ENCODE measurements at regions of chr4 and their contacts with region 1.

Region 1: DNA sequence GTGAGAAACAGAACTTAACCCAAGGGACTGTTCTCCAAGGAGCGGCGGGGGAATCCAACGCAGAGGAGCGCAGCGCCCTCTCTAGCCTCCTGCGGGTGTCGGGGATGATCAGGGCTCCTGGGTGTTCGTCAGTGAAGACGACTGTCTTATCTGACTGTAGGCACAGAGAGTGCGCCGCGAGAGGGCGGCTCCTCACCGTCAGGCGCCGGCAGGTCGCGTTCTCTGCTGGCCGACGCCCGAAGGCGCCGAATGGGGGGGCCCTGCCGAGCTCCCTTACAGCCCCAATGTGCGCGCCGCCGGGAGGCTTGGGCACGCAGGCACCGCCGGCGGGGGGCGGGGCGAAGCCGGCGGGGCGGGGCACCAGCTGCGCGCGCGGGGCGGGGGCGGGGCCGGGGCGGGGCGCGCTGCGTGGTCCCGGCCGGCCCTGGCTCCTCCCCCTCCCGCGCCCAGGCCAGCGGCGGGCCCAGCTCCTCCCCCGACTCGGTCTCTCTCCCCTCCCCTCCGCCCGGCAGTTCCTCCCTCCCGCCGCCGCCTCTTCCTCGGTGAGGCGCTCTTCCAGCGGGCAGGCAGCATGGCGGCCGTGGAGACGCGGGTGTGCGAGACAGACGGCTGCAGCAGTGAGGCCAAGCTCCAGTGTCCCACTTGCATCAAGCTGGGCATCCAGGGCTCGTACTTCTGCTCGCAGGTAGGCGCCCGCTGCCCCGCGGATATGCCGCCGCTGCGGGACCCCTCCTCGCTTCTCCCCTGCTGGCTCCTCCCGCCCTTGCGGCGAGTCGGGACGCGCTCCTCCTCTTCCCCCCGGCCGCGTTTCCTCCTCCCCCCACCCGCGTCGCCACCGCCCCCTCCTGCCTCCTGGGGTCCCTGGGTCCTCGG is at the start of gene METAP1:
- DNase-seq: peak; percentile 92 to 99 (median 96)
- ATAC-seq: peak; percentile 85
- H3K4me3 ChIP-seq: peak within 1 kb of the TSS; percentile 90
- H3K4me3 Mint-ChIP-seq: peak within 1 kb of the TSS; percentile 93
- H3K27ac ChIP-seq: peak within 1 kb of the TSS; percentile 81 to 89
- H3K27ac Mint-ChIP-seq: peak within 1 kb of the TSS; percentile 99
- H3K4me1 ChIP-seq: peaks cover 23% of the 10 kb centered on the region
- H3K4me1 Mint-ChIP-seq: peaks cover 35% of the 10 kb centered on the region
- H3K27me3 ChIP-seq: no peaks in the 10 kb centered on the region
- H3K27me3 Mint-ChIP-seq: no peaks in the 10 kb centered on the region
- CTCF ChIP-seq: peak; percentile 73
- total RNA-seq, gene METAP1: 25.1 to 26.6 TPM

Region 2: GRCh38 chr4:98467627-98468072 is 527.8 kb before region 1 on chr4:
- CTCF ChIA-PET with region 1: interaction called, 14 read pairs
- POLR2A ChIA-PET with region 1: interaction called, 7 read pairs
- intact Hi-C with region 1: loop called in 1 of 2 experiments (anchors 5 kb)
- DNase-seq: peak; percentile 48 to 84 (median 62)
- ATAC-seq: peak; percentile 97
- H3K4me3 ChIP-seq: peak overlapping the region; percentile 32
- H3K4me3 Mint-ChIP-seq: peak overlapping the region; percentile 59
- H3K27ac ChIP-seq: no peak overlapping the region
- H3K27ac Mint-ChIP-seq: no peak overlapping the region
- H3K4me1 ChIP-seq: peaks cover 18% of the 10 kb centered on the region
- H3K4me1 Mint-ChIP-seq: peaks cover 24% of the 10 kb centered on the region
- H3K27me3 ChIP-seq: no peaks in the 10 kb centered on the region
- H3K27me3 Mint-ChIP-seq: no peaks in the 10 kb centered on the region
- CTCF ChIP-seq: peak; percentile 84

Region 3: GRCh38 chr4:98939892-98940298 is 55.5 kb before region 1 on chr4:
- CTCF ChIA-PET with region 1: no interaction called
- POLR2A ChIA-PET with region 1: no interaction called
- intact Hi-C with region 1: no loop called
- DNase-seq: peak in 3 of 14 experiments; percentile 30 to 56 (median 54)
- ATAC-seq: peak; percentile 52
- H3K4me3 ChIP-seq: no peak overlapping the region
- H3K4me3 Mint-ChIP-seq: no peak overlapping the region
- H3K27ac ChIP-seq: no peak overlapping the region
- H3K27ac Mint-ChIP-seq: no peak overlapping the region
- H3K4me1 ChIP-seq: no peaks in the 10 kb centered on the region
- H3K4me1 Mint-ChIP-seq: peaks cover 7% of the 10 kb centered on the region
- H3K27me3 ChIP-seq: no peaks in the 10 kb centered on the region
- H3K27me3 Mint-ChIP-seq: no peaks in the 10 kb centered on the region
- CTCF ChIP-seq: peak; percentile 72

Region 4: DNA sequence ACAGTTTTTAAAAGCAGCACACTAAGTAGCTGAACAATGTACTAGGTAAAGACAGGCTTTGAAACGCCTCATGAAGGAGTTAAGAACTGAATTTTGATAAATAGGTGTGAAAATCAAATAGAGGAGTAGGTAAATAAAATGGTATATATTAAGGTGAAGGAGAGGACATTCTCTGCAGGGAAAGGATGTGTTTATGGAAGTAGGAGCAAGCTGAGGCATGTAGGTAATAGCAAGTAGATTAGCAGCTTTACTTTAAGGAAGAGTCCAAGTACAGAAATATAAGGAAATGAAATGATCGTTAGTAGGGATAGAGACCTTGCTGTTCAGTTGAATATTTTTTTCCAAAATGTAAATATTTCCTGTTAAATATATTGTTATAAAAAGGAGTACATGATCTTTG is 12.6 kb after region 1 on chr4:
- CTCF ChIA-PET with region 1: interaction called, 23 read pairs
- POLR2A ChIA-PET with region 1: interaction called, 3 read pairs
- intact Hi-C with region 1: no loop called
- DNase-seq: no peak
- ATAC-seq: no peak
- H3K4me3 ChIP-seq: no peak overlapping the region
- H3K4me3 Mint-ChIP-seq: no peak overlapping the region
- H3K27ac ChIP-seq: no peak overlapping the region
- H3K27ac Mint-ChIP-seq: no peak overlapping the region
- H3K4me1 ChIP-seq: no peaks in the 10 kb centered on the region
- H3K4me1 Mint-ChIP-seq: peaks cover 67% of the 10 kb centered on the region
- H3K27me3 ChIP-seq: no peaks in the 10 kb centered on the region
- H3K27me3 Mint-ChIP-seq: no peaks in the 10 kb centered on the region
- CTCF ChIP-seq: no peak

Region 5: GRCh38 chr4:99043346-99043745 is 47.9 kb after region 1 on chr4:
- CTCF ChIA-PET with region 1: interaction called, 13 read pairs
- POLR2A ChIA-PET with region 1: interaction called, 49 read pairs
- intact Hi-C with region 1: loop called in 1 of 2 experiments (anchors 2 kb)
- DNase-seq: peak in 3 of 14 experiments; percentile 61 to 86 (median 61)
- ATAC-seq: peak; percentile 96
- H3K4me3 ChIP-seq: no peak overlapping the region
- H3K4me3 Mint-ChIP-seq: peak overlapping the region; percentile 8
- H3K27ac ChIP-seq: peak overlapping the region; percentile 48 to 81
- H3K27ac Mint-ChIP-seq: peak overlapping the region; percentile 85
- H3K4me1 ChIP-seq: peaks cover 5% of the 10 kb centered on the region
- H3K4me1 Mint-ChIP-seq: peaks cover 31% of the 10 kb centered on the region
- H3K27me3 ChIP-seq: no peaks in the 10 kb centered on the region
- H3K27me3 Mint-ChIP-seq: no peaks in the 10 kb centered on the region
- CTCF ChIP-seq: no peak

Region 6: GRCh38 chr4:99071159-99071558 is 75.7 kb after region 1 on chr4:
- CTCF ChIA-PET with region 1: interaction called, 11 read pairs
- POLR2A ChIA-PET with region 1: interaction called, 5 read pairs
- intact Hi-C with region 1: no loop called
- DNase-seq: no peak
- ATAC-seq: no peak
- H3K4me3 ChIP-seq: no peak overlapping the region
- H3K4me3 Mint-ChIP-seq: no peak overlapping the region
- H3K27ac ChIP-seq: no peak overlapping the region
- H3K27ac Mint-ChIP-seq: no peak overlapping the region
- H3K4me1 ChIP-seq: no peaks in the 10 kb centered on the region
- H3K4me1 Mint-ChIP-seq: no peaks in the 10 kb centered on the region
- H3K27me3 ChIP-seq: no peaks in the 10 kb centered on the region
- H3K27me3 Mint-ChIP-seq: no peaks in the 10 kb centered on the region
- CTCF ChIP-seq: no peak

Region 7: DNA sequence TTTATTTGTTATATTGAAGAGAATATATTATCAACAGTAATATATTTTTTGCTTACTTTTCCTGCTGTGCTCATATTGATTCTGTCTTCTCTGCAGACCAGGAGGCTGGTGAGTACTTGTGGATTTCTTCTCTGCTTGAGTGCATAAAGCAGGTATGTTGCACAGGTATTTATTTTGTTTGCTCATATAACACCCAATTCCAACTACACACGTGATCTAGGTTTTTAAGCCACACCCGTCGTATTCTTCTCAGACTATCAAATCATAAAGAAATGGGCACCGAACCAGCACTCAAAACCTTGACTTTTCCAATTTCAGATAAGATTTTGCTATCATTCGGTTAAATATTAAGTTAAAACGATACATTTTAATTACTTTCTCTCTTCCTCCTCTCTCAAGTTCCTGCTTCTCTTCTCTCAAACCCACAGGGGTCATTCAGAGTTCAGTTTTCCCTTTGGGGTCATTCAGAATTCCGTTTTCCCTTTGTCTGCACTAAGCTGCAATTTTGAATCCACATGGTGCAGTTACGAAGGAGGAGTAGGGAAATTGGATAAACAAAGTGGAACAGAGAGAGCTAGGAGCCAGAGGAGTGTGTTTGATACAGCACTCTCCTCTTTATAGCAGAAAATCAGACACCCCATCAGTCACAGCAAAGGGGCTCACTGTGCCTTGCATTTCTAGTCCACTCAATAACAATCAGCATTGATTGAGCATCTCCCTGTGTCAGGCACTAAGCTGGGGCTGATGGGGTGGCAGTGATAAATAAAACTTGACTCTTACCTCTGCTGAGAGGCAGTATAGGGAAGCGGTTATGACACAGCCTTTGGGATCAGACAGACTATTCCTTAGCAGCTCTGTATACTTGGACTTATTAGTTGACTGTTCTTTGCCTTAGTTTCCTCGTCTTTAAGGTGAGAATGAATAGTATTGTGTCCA is 357.5 kb after region 1 on chr4 and contains the start of gene ADH1C:
- CTCF ChIA-PET with region 1: no interaction called
- POLR2A ChIA-PET with region 1: no interaction called
- intact Hi-C with region 1: no loop called
- DNase-seq: no peak
- ATAC-seq: no peak
- H3K4me3 ChIP-seq: no peak within 1 kb of the TSS
- H3K4me3 Mint-ChIP-seq: no peak within 1 kb of the TSS
- H3K27ac ChIP-seq: no peak within 1 kb of the TSS
- H3K27ac Mint-ChIP-seq: no peak within 1 kb of the TSS
- H3K4me1 ChIP-seq: no peaks in the 10 kb centered on the region
- H3K4me1 Mint-ChIP-seq: peaks cover 11% of the 10 kb centered on the region
- H3K27me3 ChIP-seq: peaks cover 2 to 3% of the 10 kb centered on the region in 2 experiments
- H3K27me3 Mint-ChIP-seq: peaks cover 24% of the 10 kb centered on the region
- CTCF ChIP-seq: no peak
- total RNA-seq, gene ADH1C: not detected

Region 8: DNA sequence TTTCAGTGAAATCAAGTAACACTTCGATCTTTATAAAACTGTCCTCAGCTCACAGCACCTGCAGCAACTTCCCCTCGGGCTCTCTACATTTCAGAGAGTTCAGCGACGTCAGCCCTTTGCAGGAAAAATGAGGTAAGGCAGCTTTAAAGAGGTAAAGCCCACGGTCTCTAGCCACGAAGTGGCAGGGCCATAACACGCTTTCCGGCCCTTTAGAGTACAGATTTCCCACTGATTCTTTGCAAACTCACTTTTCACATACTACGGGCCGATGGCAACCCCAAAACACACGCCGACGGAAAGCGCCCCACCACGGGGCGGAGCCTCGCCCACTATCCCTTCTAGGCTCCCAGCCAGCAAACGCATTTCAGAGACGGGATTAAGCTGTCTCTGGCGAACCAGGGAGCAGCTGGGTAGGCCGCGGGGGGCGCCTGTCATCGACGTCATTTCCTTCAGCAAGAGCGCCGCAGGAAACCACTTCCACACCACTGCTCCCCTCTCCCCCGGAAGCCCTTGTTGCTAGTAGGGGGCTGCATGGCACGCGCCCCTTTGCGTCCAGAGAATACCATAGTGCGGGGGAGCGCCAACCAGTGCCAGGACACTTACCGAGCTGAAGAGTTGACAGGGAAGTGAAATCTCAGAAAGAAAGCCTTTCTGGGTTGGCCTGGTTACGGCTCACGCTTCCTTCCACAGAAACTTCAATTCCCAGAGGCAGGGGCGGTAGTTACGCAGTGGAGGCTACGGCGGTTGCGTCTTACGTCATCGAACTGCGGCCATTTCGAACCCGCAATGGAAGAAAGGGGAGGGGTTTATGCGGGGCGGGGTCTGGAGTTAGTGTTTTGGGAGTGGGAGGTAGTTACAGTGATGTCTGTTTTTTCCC is 568.1 kb after region 1 on chr4 and contains the start of gene TRMT10A:
- CTCF ChIA-PET with region 1: interaction called, 3 read pairs
- POLR2A ChIA-PET with region 1: interaction called, 12 read pairs
- intact Hi-C with region 1: loop called (anchors 1 to 5 kb)
- DNase-seq: peak; percentile 88 to 98 (median 92)
- ATAC-seq: peak; percentile 81
- H3K4me3 ChIP-seq: peak within 1 kb of the TSS; percentile 80
- H3K4me3 Mint-ChIP-seq: peak within 1 kb of the TSS; percentile 91
- H3K27ac ChIP-seq: peak within 1 kb of the TSS; percentile 98 to 99
- H3K27ac Mint-ChIP-seq: peak within 1 kb of the TSS; percentile 99
- H3K4me1 ChIP-seq: peaks cover 11% of the 10 kb centered on the region
- H3K4me1 Mint-ChIP-seq: peaks cover 25% of the 10 kb centered on the region
- H3K27me3 ChIP-seq: peaks cover 0 to 9% of the 10 kb centered on the region in 2 experiments
- H3K27me3 Mint-ChIP-seq: peaks cover 28% of the 10 kb centered on the region
- CTCF ChIP-seq: no peak
- total RNA-seq, gene TRMT10A: 1.6 to 2.0 TPM